Endothelial cell of umbilical vein (primary cell): ENCODE measurements at regions of chr5 and their contacts with region 1.

Region 1: DNA sequence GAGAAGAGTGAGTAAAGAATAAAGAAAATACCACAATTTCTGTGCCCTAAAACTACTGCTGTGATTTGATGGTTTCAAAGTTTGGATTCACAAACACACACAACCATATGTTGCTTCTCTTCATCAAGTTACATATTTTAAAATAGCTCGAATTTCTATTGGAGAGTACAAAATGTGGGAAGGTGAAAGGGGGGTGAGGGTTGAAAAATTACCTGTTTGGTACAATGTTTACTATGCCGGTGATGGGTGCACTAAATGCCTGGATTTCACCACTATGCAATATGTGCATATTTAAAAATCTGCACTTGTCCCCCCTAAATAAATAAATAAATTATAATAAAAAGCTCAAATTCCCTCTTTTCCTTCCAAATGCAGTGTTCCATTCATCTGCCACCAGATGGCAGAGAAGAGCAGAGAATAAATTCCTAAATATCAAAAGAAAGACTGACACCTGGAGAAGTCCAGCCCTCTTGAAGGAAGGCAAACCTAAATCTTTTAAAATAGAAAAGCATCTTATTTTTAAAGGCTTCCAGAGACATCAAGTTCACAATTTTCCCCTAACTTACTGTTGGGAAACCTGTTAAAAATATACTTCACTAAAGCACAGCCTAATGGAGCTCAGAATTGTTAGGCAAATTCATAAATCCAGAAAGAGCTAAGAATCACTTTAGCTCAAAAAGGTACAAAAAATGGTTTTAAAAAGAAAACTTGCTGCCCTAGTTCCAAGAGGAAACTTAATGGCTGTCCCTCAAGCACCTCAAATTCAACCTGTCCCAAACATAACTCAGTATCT is 24.8 kb upstream of the HNRNPA0 start:
- DNase-seq: peak; percentile 59
- H3K4me3 ChIP-seq: no peak overlapping the region
- H3K27ac ChIP-seq: no peak overlapping the region
- H3K4me1 ChIP-seq: no peaks in the 10 kb centered on the region
- H3K27me3 ChIP-seq: peaks cover 7 to 13% of the 10 kb centered on the region in 2 experiments
- CTCF ChIP-seq: peak; percentile 50 to 51
- POLR2A ChIP-seq: no peak

Region 2: GRCh38 chr5:137743031-137743640 is 35.8 kb before region 1 on chr5:
- CTCF ChIA-PET with region 1: interaction called, 16 read pairs
- POLR2A ChIA-PET with region 1: no interaction called
- dilution Hi-C with region 1: no loop called
- intact Hi-C with region 1: no loop called
- DNase-seq: peak; percentile 72
- H3K4me3 ChIP-seq: no peak overlapping the region
- H3K27ac ChIP-seq: no peak overlapping the region
- H3K4me1 ChIP-seq: no peaks in the 10 kb centered on the region
- H3K27me3 ChIP-seq: no peaks in the 10 kb centered on the region
- CTCF ChIP-seq: peak; percentile 65 to 67
- POLR2A ChIP-seq: no peak

Region 3: GRCh38 chr5:137800700-137801411 is 21.9 kb after region 1 on chr5:
- CTCF ChIA-PET with region 1: interaction called, 27 read pairs
- POLR2A ChIA-PET with region 1: no interaction called
- dilution Hi-C with region 1: no loop called
- intact Hi-C with region 1: no loop called
- DNase-seq: no peak
- H3K4me3 ChIP-seq: no peak overlapping the region
- H3K27ac ChIP-seq: no peak overlapping the region
- H3K4me1 ChIP-seq: no peaks in the 10 kb centered on the region
- H3K27me3 ChIP-seq: peaks cover 14 to 15% of the 10 kb centered on the region in 2 experiments
- CTCF ChIP-seq: no peak
- POLR2A ChIP-seq: no peak

Region 4: DNA sequence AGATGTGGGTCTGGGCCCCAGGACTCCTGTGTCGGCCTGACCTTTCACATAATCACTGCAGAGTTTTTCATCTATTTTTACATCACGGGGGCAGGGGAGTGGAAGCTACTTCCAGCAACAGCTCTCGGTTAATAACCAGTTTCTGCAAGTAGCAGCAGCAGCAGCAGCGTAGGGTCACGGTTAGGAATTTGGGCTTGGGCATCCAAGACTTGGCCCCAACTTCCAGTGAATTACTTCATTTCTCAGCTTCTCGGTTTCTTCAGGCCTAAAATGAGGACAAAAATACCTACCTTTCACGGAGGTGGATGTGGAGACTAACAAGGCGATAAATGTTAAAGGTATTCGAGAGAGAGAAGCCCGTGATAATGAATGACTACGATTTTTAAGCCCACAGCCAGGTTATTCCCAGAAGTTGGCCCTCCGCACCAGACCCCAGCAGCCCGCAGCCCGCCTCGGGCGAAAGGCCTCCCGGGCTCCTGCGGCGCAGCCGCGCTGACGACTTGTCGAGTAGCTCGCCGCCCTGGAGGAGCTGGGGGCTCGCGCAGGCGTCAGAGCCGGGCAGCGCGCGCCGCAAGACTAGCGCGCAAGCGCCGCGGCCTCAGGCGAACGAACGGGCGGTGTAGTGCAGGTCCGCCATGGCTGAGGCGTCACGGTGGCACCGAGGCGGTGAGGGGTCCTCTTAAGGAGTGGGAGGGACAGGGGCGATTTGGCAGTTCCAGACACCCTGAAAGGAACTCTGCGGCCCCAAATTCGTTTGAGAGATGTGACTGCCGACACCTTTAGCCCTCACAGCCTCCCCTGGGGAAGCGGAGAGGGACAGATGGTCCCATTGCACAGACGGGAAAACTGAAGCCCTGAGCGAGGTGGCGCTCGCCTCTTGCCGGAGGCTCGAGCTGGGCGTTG is 110.1 kb after region 1 on chr5 and contains the start of gene PKD2L2:
- CTCF ChIA-PET with region 1: interaction called, 15 read pairs
- POLR2A ChIA-PET with region 1: no interaction called
- dilution Hi-C with region 1: no loop called
- intact Hi-C with region 1: loop called (anchors 5 kb)
- DNase-seq: peak; percentile 82
- H3K4me3 ChIP-seq: peak within 1 kb of the TSS in 2 of 3 experiments; percentile 25 to 53
- H3K27ac ChIP-seq: peak within 1 kb of the TSS; percentile 9
- H3K4me1 ChIP-seq: peaks cover 13% of the 10 kb centered on the region
- H3K27me3 ChIP-seq: no peaks in the 10 kb centered on the region
- CTCF ChIP-seq: peak in 1 of 2 donors; percentile 13
- POLR2A ChIP-seq: no peak
- total RNA-seq, gene PKD2L2: not detected in 2 replicates

Region 5: DNA sequence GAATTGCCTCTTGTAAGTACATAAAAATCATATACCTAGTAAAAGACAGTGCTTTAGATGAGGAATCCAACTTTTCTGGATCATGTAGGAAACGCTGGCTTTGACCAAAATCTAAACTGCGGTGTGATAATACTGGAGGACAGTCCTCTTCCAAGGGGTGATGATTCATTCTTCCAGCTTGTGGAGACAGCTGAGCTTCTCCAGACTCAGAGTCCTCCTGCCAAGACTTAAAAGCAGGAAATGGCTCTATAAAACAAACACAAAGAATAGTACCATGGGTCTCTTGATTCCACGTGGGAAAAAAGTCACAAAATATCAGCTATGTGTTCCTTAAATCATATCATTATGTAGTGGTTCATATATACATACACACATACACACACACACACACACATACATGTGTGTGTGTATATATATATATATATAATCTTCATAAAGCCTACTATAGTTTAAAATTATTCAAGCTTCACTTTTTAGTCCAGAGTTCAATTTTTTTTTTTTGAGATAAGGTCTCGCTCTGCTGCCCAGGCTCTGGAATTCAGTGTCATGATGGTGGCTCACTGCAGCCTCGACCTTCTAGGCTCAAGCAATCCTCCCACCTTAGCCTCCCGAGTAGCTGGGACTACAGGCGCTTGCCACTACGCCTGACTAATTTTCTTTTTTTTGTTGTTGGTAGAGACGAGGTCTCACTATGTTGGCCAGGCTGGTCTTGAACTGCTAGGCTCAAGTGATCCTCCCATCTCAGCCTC is 175.3 kb after region 1 on chr5:
- CTCF ChIA-PET with region 1: interaction called, 28 read pairs
- POLR2A ChIA-PET with region 1: no interaction called
- dilution Hi-C with region 1: no loop called
- intact Hi-C with region 1: no loop called
- DNase-seq: peak; percentile 91
- H3K4me3 ChIP-seq: peak overlapping the region in 1 of 3 experiments; percentile 23
- H3K27ac ChIP-seq: peak overlapping the region; percentile 70
- H3K4me1 ChIP-seq: peaks cover 36% of the 10 kb centered on the region
- H3K27me3 ChIP-seq: no peaks in the 10 kb centered on the region
- CTCF ChIP-seq: no peak
- POLR2A ChIP-seq: no peak

Region 6: DNA sequence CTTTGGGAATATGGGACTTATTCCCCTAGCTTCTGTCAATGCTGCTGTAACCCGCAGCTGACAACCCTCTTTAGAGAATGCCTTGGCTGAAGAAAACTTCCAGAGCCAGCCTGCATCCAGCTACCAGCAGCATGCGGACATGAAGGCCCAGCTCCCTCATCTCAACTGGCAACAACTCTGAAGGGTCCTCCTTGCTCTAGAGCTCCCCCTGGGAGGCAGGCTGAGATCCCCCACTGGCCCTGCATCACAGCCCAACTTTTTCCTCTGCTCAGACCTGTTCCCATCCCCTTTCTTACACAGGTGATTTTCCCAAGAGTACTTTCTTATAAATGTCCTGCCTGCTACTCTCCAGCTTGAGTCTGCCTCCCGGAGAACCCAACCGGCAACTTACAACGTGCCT is 286.1 kb after region 1 on chr5:
- CTCF ChIA-PET with region 1: interaction called, 148 read pairs
- POLR2A ChIA-PET with region 1: no interaction called
- dilution Hi-C with region 1: no loop called
- intact Hi-C with region 1: loop called (anchors 1 kb)
- DNase-seq: no peak
- H3K4me3 ChIP-seq: no peak overlapping the region
- H3K27ac ChIP-seq: no peak overlapping the region
- H3K4me1 ChIP-seq: no peaks in the 10 kb centered on the region
- H3K27me3 ChIP-seq: no peaks in the 10 kb centered on the region
- CTCF ChIP-seq: peak; percentile 16 to 44
- POLR2A ChIP-seq: no peak